Breast epithelium (tissue), 4 donors: ENCODE measurements at regions of chr7 and their contacts with region 1.

Region 1: DNA sequence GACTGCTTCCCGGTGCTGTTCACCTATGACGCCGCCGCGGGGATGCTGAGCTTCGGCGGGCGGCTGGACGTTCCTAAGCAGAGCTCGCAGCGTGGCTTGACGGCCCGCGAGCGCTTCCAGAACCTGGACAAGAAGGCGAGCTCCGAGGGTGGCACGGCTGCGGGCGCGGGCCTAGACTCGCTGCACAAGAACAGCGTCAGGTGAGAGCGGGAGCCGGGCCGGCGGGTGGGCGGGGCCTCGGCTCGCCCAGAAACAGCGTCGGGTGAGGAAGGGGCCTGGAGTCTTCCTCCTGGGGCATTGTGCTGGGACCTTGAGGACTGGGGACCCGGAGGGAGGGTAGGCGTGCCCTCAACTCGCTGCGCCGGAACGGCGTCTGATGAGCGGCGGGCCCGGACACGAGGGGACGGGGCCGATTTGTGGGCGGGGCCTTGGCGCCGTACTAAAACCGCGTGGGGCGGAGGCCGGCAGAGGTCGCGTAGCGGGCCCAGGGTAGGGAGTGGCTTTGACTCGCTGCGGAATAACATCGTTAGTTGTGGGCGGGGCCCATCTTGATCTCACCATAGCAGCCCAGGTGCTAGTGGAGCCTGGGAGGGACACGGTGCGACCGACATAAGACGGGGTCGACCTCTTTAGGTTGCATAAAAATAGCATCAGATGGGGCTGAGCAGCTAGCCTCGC is 15.6 kb downstream of the PDAP1 start:
- DNase-seq: peak; percentile 71 to 76
- H3K4me3 ChIP-seq: peak overlapping the region; percentile 40 to 71 (median 69)
- H3K27ac ChIP-seq: peak overlapping the region; percentile 71 to 74
- H3K4me1 ChIP-seq: no peaks in the 10 kb centered on the region
- H3K27me3 ChIP-seq: no peaks in the 10 kb centered on the region
- CTCF ChIP-seq: no peak
- POLR2A ChIP-seq: no peak

Region 2: DNA sequence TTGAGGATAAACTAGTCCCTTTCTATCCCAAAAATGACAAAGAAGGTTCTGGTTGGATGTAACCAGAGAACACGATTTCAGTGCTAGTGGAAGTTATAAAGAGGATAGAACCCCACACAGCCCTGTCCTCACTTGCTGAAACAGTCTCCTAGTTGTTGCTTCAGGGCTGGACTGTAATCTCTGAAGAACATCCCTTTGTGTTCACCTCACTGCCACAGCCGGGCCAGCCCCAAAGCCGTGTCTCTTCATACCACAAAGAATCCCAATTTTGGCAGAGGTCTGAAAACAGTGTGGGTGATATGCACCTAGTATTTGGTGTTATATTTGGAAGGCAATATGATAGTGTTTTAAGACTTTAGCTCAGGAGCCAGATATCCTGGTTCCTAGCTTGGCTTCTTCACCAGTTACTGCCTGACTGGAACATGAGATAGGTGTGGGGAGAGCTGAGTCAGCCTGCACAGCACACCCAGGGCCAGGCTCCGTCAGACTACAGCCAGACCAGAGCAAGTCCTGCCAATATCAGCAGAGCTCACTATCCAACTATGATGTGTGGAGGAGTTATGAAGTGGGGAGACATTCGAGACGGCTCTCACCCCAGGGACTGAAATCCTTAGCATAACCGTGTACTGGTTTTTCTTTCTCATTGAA is 370.0 kb after region 1 on chr7:
- intact Hi-C with region 1: loop called (anchors 10 kb)
- DNase-seq: peak in 1 of 2 donors; percentile 22
- H3K4me3 ChIP-seq: no peak overlapping the region
- H3K27ac ChIP-seq: peak overlapping the region in 1 of 2 donors; percentile 9
- H3K4me1 ChIP-seq: no peaks in the 10 kb centered on the region
- H3K27me3 ChIP-seq: no peaks in the 10 kb centered on the region
- CTCF ChIP-seq: no peak
- POLR2A ChIP-seq: no peak

Region 3: DNA sequence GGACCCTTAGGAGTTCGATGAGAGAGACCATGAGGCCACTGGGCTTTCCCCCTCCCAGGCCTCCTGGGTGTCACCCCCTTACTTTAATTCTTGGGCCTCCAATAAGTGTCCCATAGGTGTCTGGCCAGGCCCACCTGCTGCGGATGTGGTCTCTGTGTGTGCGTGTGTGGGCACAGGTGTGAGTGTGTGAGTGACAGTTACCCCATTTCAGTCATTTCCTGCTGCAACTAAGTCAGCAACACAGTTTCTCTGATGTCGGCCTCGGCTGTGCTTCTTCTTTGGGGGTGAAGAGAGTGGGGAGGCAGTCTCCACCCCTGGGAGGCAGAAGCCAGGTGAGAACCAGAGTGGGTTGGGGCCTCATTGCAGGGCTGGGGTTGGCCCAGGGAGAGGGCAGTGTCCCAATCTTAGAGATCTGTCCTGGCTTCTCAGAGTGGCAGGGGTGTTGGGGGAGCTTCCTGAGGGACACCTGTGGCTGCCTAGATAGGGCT is 828.5 kb after region 1 on chr7:
- intact Hi-C with region 1: no loop called
- DNase-seq: peak in 1 of 2 donors; percentile 27
- H3K4me3 ChIP-seq: peak overlapping the region in 1 of 3 donors; percentile 11
- H3K27ac ChIP-seq: peak overlapping the region in 1 of 2 donors; percentile 43
- H3K4me1 ChIP-seq: no peaks in the 10 kb centered on the region
- H3K27me3 ChIP-seq: no peaks in the 10 kb centered on the region
- CTCF ChIP-seq: no peak
- POLR2A ChIP-seq: no peak